ENCODE measurements at regions of chr7 and their contacts with region 1.

Region 1: GRCh38 chr7:876167-876967 is at the start of gene GET4:
- DNase-seq: peak; percentile 98
- ATAC-seq: peak; percentile 80
- total RNA-seq, gene GET4: 20.6 TPM

Region 2: GRCh38 chr7:786472-787255 is 89.7 kb before region 1 on chr7:
- intact Hi-C with region 1: loop called (anchors 10 kb)
- DNase-seq: peak; percentile 82
- ATAC-seq: peak; percentile 82

Region 3: GRCh38 chr7:821688-822087 is 54.7 kb before region 1 on chr7:
- intact Hi-C with region 1: loop called (anchors 10 kb)
- DNase-seq: no peak
- ATAC-seq: peak; percentile 77

Measured in left ventricle myocardium superior (tissue), 1 donor.